ENCODE measurements at regions of chr2 and their contacts with region 1.

Region 1: DNA sequence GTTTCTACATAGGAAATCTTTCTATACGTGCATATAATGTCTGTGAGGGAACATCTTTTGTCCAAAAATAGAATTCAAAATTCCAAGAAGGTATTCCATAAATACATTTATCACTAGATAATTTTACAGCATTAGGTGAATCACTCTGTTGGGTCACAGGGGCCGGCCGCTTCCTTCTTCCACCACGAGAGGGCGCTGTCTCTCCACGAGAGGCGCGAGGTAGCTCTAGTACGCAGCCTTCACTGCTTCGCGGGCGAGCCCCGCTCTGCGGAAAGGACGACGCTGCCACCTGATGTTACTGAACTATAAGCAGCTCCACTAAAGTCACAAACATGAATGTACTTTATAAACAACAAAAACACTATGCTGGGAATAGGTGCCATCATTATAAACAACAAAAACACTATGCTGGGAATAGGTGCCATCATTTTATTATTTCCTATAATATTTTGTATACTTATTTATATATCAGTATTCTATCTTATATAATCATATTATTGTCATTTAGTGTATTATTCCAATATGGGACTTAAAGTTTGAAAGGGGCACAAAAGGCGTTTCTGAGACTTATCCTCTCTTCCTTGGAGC is 69.4 kb upstream of the REV1 start:
- DNase-seq: peak; percentile 76
- H3K4me3 Mint-ChIP-seq: no peak overlapping the region
- H3K27ac Mint-ChIP-seq: no peak overlapping the region
- H3K4me1 Mint-ChIP-seq: no peaks in the 10 kb centered on the region
- H3K27me3 Mint-ChIP-seq: peaks cover 26% of the 10 kb centered on the region
- CTCF ChIP-seq: peak; percentile 96

Region 2: DNA sequence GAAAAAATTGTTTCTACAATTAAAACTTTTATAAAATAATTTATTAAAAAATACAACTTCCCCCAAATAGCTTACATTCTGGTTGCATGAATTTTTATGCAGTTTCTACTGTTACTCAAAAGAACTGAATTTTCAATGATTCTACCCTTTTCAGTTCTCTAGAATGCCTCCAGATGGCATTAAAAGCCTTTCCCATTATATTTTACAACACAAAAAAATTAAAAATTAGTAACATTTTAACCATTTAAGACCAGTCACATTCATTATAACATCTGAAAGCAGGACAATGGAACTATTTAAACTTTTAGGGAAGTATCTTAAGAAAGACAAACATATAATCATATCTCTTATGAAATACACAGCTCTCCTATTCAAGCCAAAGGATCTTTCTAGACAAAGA is 166.7 kb after region 1 on chr2:
- CTCF ChIA-PET with region 1: interaction called, 3 read pairs
- POLR2A ChIA-PET with region 1: no interaction called
- intact Hi-C with region 1: loop called (anchors 2 kb)
- DNase-seq: no peak
- H3K4me3 Mint-ChIP-seq: no peak overlapping the region
- H3K27ac Mint-ChIP-seq: no peak overlapping the region
- H3K4me1 Mint-ChIP-seq: no peaks in the 10 kb centered on the region
- H3K27me3 Mint-ChIP-seq: no peaks in the 10 kb centered on the region
- CTCF ChIP-seq: peak; percentile 32

Region 3: DNA sequence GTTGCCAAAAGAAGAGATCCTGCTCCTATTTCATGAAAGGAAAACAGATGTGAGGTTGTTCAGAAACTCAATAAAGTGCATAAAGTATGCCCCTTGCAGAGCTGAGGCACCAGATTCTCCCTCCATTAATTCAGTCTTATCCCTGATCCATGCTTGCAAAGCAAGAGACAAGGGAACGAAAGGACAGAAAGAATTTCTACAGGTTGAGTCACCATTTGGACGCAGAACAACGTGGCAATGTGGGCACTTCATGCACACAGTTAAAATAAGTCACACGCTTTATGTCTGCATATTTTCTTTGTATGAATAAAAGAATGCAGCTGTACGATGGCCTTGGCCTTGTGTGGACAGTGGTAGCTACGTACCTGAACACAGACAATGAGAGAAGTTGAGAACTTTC is 252.4 kb after region 1 on chr2:
- CTCF ChIA-PET with region 1: interaction called, 4 read pairs
- POLR2A ChIA-PET with region 1: no interaction called
- intact Hi-C with region 1: loop called (anchors 2 kb)
- DNase-seq: peak; percentile 57
- H3K4me3 Mint-ChIP-seq: no peak overlapping the region
- H3K27ac Mint-ChIP-seq: no peak overlapping the region
- H3K4me1 Mint-ChIP-seq: peaks cover 38% of the 10 kb centered on the region
- H3K27me3 Mint-ChIP-seq: no peaks in the 10 kb centered on the region
- CTCF ChIP-seq: no peak

Region 4: DNA sequence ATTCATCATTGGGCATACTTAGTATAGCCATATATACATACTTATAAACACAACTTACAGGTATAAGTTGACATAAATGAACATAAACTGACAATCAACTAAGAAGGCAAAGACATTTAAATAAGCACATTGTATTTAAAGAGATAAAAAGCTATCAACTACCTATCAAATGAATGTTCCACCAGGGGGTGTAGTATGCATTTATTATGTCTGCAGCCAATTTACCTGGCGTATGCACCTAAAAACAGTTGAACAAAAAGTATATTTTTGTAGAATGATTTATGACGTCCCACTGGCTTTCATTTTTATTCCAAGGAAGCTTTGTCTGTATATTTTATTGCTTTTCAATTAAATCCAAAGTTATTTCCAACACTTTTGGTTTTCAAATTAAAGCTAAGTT is 259.7 kb after region 1 on chr2:
- CTCF ChIA-PET with region 1: interaction called, 5 read pairs
- POLR2A ChIA-PET with region 1: no interaction called
- intact Hi-C with region 1: loop called (anchors 1 kb)
- DNase-seq: peak; percentile 46
- H3K4me3 Mint-ChIP-seq: no peak overlapping the region
- H3K27ac Mint-ChIP-seq: no peak overlapping the region
- H3K4me1 Mint-ChIP-seq: peaks cover 4% of the 10 kb centered on the region
- H3K27me3 Mint-ChIP-seq: peaks cover 9% of the 10 kb centered on the region
- CTCF ChIP-seq: peak; percentile 55

Region 5: GRCh38 chr2:100242891-100243619 is 683.9 kb after region 1 on chr2:
- CTCF ChIA-PET with region 1: interaction called, 54 read pairs
- POLR2A ChIA-PET with region 1: no interaction called
- intact Hi-C with region 1: loop called (anchors 1 kb)
- DNase-seq: peak; percentile 68
- H3K4me3 Mint-ChIP-seq: no peak overlapping the region
- H3K27ac Mint-ChIP-seq: no peak overlapping the region
- H3K4me1 Mint-ChIP-seq: no peaks in the 10 kb centered on the region
- H3K27me3 Mint-ChIP-seq: no peaks in the 10 kb centered on the region
- CTCF ChIP-seq: peak; percentile 91

Region 6: DNA sequence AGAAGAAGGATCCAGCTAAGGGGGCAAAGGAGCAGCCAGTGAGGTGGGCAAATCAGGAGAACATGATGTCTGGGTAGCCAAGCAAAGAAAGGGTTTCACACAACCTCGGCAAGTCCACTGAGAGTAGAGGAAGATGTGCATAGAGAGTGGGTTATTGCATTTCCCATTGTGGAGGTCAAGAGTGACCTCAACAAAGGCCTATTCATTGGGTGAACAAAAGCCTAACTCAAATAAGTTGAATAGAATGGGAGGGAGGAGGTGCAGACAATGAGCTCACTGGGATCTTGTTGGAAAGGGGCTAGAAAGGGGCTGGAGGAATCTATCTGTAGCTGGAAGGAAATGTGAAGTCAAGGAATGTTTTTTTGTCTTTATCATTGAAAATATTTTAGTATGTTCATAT is 989.6 kb after region 1 on chr2:
- CTCF ChIA-PET with region 1: no interaction called
- POLR2A ChIA-PET with region 1: no interaction called
- intact Hi-C with region 1: no loop called
- DNase-seq: no peak
- H3K4me3 Mint-ChIP-seq: no peak overlapping the region
- H3K27ac Mint-ChIP-seq: no peak overlapping the region
- H3K4me1 Mint-ChIP-seq: no peaks in the 10 kb centered on the region
- H3K27me3 Mint-ChIP-seq: peaks cover 23% of the 10 kb centered on the region
- CTCF ChIP-seq: no peak

Region 7: GRCh38 chr2:100742277-100743254 is 1183.4 kb after region 1 on chr2:
- CTCF ChIA-PET with region 1: no interaction called
- POLR2A ChIA-PET with region 1: no interaction called
- intact Hi-C with region 1: no loop called
- DNase-seq: peak; percentile 11
- H3K4me3 Mint-ChIP-seq: no peak overlapping the region
- H3K27ac Mint-ChIP-seq: peak overlapping the region; percentile 44
- H3K4me1 Mint-ChIP-seq: peaks cover 28% of the 10 kb centered on the region
- H3K27me3 Mint-ChIP-seq: no peaks in the 10 kb centered on the region
- CTCF ChIP-seq: no peak

Measured in MCF 10A (cell line).